ENCODE measurements at regions of chr1 and their contacts with region 1.

Region 1: GRCh38 chr1:67771152-67771551 is 62.1 kb downstream of the GNG12 start:
- DNase-seq: no peak
- H3K4me3 ChIP-seq: no peak overlapping the region
- H3K27ac ChIP-seq: no peak overlapping the region
- H3K4me1 ChIP-seq: no peaks in the 10 kb centered on the region
- H3K27me3 ChIP-seq: no peaks in the 10 kb centered on the region
- CTCF ChIP-seq: no peak

Region 2: DNA sequence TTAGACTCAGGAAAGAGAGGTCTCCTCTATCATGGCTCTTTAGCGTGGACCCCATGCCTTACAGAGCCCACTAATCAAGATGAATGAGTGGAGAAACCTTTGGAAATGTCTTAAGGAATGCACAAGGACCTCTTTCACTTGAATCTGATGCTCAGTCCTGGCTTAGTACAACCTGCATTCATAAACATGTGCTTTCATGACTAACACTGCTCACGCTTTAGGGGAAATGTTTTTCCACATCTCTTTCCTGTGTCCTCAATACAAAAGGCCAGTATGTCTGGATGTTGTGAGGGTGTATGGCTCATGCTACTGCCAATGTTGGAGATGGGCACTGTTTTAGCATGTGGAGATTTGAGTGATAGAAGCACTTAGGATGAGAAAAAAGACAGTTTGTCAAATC is 76.3 kb after region 1 on chr1:
- intact Hi-C with region 1: loop called (anchors 5 kb)
- DNase-seq: no peak
- H3K4me3 ChIP-seq: no peak overlapping the region
- H3K27ac ChIP-seq: no peak overlapping the region
- H3K4me1 ChIP-seq: peaks cover 4% of the 10 kb centered on the region
- H3K27me3 ChIP-seq: no peaks in the 10 kb centered on the region
- CTCF ChIP-seq: no peak

Region 3: GRCh38 chr1:68111519-68112436 is 340.6 kb after region 1 on chr1:
- intact Hi-C with region 1: loop called (anchors 5 kb)
- DNase-seq: peak; percentile 58
- H3K4me3 ChIP-seq: no peak overlapping the region
- H3K27ac ChIP-seq: no peak overlapping the region
- H3K4me1 ChIP-seq: peaks cover 5% of the 10 kb centered on the region
- H3K27me3 ChIP-seq: no peaks in the 10 kb centered on the region
- CTCF ChIP-seq: peak; percentile 44

Measured in colonic mucosa (tissue), 4 donors.